MCF 10A (cell line): ENCODE measurements at regions of chr6 and their contacts with region 1.

Region 1: DNA sequence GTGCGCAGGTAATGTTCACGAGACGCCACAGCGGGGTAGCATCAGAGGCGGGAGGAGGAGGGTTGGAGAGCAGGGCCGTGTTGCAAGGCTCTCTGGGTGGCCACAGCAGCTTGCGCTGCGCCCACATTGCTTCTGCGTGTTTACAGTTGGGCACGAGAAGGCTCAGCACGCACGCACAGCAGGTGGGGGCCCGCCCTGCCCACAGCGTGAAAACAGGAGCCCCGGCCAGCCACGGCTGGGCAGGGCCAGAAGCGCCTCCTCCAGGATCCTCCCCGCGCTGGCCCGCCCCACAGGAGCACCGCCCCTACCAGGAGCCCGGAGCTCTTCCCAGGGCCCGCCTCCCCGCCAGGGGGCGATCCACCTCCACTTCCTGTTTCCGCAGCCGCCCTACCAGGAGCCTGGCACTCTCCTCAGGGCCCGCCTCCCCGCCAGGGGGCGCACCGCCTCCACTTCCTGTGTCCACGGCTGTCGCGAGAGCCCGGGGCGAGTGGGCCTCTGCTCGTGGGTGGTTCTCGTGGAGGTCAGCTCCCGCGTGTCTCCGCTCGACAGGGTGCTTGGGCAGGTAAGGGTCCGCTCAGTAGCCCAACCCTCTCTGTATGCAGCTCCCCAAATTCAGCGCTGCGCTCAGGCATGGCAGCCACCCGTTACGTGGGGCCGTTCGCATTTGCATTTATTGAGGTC is at the start of gene FAM50B:
- DNase-seq: peak; percentile 84
- H3K4me3 Mint-ChIP-seq: peak within 1 kb of the TSS; percentile 75
- H3K27ac Mint-ChIP-seq: peak within 1 kb of the TSS; percentile 95
- H3K4me1 Mint-ChIP-seq: peaks cover 17% of the 10 kb centered on the region
- H3K27me3 Mint-ChIP-seq: no peaks in the 10 kb centered on the region
- CTCF ChIP-seq: peak; percentile 76
- total RNA-seq, gene FAM50B: 4.0 and 4.3 TPM in 2 replicates

Region 2: DNA sequence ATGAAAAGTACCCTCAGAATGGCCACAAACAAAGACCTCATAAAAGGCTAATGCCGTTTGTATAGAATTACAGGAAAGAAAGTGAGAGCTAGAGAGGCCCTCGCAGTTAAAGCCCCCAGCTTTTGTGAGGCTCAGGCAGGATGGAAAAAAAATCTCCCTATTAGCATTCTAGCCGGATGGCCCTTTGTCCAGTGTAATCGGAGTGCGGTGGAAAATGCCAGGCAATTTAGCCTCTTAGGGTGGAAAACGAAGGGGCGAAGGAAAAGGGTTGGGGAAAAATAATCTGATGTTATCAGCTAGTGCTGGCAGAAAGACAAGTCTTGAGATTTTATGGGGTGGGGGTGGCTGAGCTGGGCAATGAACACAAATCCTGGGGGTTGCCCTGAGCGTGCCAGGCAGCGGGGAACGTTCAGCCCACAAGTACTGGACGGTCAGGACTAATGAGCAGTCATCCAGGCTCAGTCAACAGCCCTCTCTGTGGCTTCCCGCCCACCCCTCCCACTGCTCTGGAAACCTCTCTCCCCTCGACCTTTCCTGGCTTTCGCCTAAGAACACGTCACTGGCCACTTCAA is 497.9 kb before region 1 on chr6:
- CTCF ChIA-PET with region 1: no interaction called
- POLR2A ChIA-PET with region 1: no interaction called
- intact Hi-C with region 1: no loop called
- DNase-seq: no peak
- H3K4me3 Mint-ChIP-seq: no peak overlapping the region
- H3K27ac Mint-ChIP-seq: no peak overlapping the region
- H3K4me1 Mint-ChIP-seq: no peaks in the 10 kb centered on the region
- H3K27me3 Mint-ChIP-seq: no peaks in the 10 kb centered on the region
- CTCF ChIP-seq: no peak

Region 3: DNA sequence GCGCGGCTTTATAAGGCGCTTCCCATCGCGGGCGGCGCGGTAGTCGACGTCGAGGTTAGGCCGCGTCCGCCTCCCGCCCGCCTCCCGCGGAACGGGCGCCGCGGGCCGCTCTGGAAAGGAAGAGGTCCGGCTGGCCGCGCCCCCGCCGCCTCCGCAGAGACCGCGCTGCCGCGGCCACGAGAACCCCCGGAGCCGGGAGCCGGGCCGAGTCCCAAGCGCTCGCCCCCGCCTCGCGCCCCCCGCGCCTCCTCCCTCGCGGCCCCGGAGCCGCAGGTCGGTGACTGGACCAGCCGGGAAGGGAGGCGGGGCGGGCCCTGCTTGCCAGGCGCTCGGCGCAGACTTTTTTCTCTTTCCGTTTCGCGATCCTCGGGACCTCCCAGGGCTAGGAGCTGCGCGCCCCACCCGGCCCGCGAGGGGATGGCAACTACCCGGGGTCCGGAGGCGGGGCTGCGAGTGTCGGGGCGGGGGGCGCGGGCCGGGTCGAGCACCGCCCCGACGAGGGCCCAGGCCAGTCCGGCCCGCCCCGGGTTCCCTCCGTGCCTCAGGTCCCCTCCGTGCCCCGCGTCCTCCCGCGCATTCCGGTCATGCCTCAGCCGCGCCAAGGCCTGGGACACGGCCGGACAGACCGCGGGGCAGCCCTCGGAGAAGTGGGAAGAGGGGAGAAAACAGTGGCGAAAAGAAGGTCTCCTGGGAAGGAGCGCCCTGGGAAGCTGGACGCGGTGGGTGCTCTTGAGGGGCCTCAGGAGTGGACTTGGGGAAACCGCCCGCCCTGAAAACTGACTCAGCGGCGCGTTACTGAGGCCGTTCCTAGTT is 97.1 kb before region 1 on chr6:
- CTCF ChIA-PET with region 1: interaction called, 14 read pairs
- POLR2A ChIA-PET with region 1: interaction called, 31 read pairs
- intact Hi-C with region 1: loop called (anchors 1 kb)
- DNase-seq: peak; percentile 67
- H3K4me3 Mint-ChIP-seq: peak overlapping the region; percentile 81
- H3K27ac Mint-ChIP-seq: no peak overlapping the region
- H3K4me1 Mint-ChIP-seq: peaks cover 27% of the 10 kb centered on the region
- H3K27me3 Mint-ChIP-seq: no peaks in the 10 kb centered on the region
- CTCF ChIP-seq: peak; percentile 24

Region 4: GRCh38 chr6:3808759-3809514 is 40.1 kb before region 1 on chr6:
- CTCF ChIA-PET with region 1: interaction called, 11 read pairs
- POLR2A ChIA-PET with region 1: interaction called, 12 read pairs
- intact Hi-C with region 1: loop called (anchors 2 kb)
- DNase-seq: peak; percentile 90
- H3K4me3 Mint-ChIP-seq: peak overlapping the region; percentile 36
- H3K27ac Mint-ChIP-seq: peak overlapping the region; percentile 89
- H3K4me1 Mint-ChIP-seq: peaks cover 38% of the 10 kb centered on the region
- H3K27me3 Mint-ChIP-seq: no peaks in the 10 kb centered on the region
- CTCF ChIP-seq: no peak

Region 5: GRCh38 chr6:3868544-3868943 is 19.5 kb after region 1 on chr6:
- CTCF ChIA-PET with region 1: interaction called, 15 read pairs
- POLR2A ChIA-PET with region 1: interaction called, 7 read pairs
- intact Hi-C with region 1: no loop called
- DNase-seq: no peak
- H3K4me3 Mint-ChIP-seq: no peak overlapping the region
- H3K27ac Mint-ChIP-seq: no peak overlapping the region
- H3K4me1 Mint-ChIP-seq: peaks cover 6% of the 10 kb centered on the region
- H3K27me3 Mint-ChIP-seq: no peaks in the 10 kb centered on the region
- CTCF ChIP-seq: no peak

Region 6: DNA sequence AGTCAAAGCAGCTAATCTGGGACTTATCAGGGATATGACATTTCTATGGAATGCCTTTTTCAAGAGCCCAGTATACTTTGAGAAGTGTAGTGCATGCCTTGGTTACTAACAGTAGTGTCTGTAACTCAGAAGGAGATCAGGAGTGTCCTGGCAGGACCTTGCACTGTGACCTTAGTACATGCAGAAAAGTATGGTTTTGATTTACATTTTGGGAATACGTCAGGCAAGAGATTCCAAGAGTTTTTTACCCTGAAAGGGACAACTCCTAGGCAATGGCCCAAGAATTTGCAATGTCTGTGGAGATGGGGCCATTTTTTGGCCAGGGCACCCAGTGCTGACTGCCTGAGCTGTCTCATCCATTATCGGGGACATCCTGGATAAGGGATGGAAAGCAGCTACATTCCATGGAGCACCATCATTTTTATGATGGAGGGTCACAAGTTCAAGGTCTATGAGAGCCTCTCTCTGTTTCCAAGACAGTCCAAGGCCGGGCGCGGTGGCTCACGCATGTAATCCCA is 80.3 kb after region 1 on chr6:
- CTCF ChIA-PET with region 1: interaction called, 58 read pairs
- POLR2A ChIA-PET with region 1: interaction called, 15 read pairs
- intact Hi-C with region 1: loop called (anchors 1 kb)
- DNase-seq: no peak
- H3K4me3 Mint-ChIP-seq: no peak overlapping the region
- H3K27ac Mint-ChIP-seq: no peak overlapping the region
- H3K4me1 Mint-ChIP-seq: peaks cover 15% of the 10 kb centered on the region
- H3K27me3 Mint-ChIP-seq: no peaks in the 10 kb centered on the region
- CTCF ChIP-seq: no peak

Region 7: DNA sequence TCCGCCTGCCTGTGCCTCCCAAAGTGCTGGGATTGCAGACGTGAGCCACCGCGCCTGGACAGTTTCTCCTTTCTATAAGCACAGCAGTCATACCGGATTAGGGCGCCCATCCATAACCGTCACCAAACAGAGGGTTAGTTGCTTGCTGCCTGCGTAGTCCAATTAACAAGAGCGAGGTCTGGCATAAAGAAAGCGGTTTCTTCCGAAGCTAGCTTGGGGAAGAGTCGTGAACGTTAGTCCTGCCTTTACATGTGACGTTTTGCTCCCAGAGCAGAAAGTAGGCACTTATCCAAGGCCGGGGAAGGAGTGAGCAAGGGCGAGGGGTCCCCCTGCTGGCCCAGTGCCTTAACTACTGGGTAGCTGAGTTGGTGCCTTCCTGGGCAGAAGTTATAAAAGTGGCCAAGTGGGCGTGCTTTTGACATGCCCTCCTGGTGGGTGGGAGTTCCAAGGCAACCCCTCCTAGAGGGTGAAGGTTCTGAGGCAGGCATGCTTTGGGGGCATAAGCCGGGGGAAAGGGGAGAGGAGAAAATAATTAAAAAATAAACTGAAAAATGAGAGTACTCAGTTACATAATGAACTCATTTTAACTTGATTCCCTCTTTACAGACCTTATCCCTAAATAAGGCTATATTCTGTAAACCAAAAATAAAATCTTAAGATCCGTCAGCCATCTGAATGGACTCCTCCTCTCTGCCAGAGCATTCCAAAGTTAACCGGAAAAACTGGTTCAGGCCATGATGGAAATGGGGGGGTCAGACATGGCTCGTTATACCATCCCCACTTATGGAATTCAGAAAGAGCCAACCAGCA is 141.8 kb after region 1 on chr6:
- CTCF ChIA-PET with region 1: interaction called, 12 read pairs
- POLR2A ChIA-PET with region 1: interaction called, 16 read pairs
- intact Hi-C with region 1: loop called (anchors 2 kb)
- DNase-seq: peak; percentile 87
- H3K4me3 Mint-ChIP-seq: peak overlapping the region; percentile 62
- H3K27ac Mint-ChIP-seq: peak overlapping the region; percentile 43
- H3K4me1 Mint-ChIP-seq: peaks cover 16% of the 10 kb centered on the region
- H3K27me3 Mint-ChIP-seq: no peaks in the 10 kb centered on the region
- CTCF ChIP-seq: peak; percentile 77